Breast epithelium (tissue), 4 donors: ENCODE measurements at regions of chrX and their contacts with region 1.

Region 1: GRCh38 chrX:78283511-78283910 is 43.9 kb downstream of the CYSLTR1 start:
- DNase-seq: no peak
- H3K4me3 ChIP-seq: no peak overlapping the region
- H3K27ac ChIP-seq: no peak overlapping the region
- H3K4me1 ChIP-seq: no peaks in the 10 kb centered on the region
- H3K27me3 ChIP-seq: peaks cover 0 to 7% of the 10 kb centered on the region in 2 donors
- CTCF ChIP-seq: no peak
- POLR2A ChIP-seq: no peak

Region 2: GRCh38 chrX:77820091-77820727 is 463.3 kb before region 1 on chrX:
- intact Hi-C with region 1: no loop called
- DNase-seq: no peak
- H3K4me3 ChIP-seq: no peak overlapping the region
- H3K27ac ChIP-seq: no peak overlapping the region
- H3K4me1 ChIP-seq: no peaks in the 10 kb centered on the region
- H3K27me3 ChIP-seq: peaks cover 0 to under 1% of the 10 kb centered on the region in 2 donors
- CTCF ChIP-seq: no peak
- POLR2A ChIP-seq: no peak

Region 3: GRCh38 chrX:78693536-78693935 is 410.0 kb after region 1 on chrX:
- intact Hi-C with region 1: loop called (anchors 10 kb)
- DNase-seq: no peak
- H3K4me3 ChIP-seq: no peak overlapping the region
- H3K27ac ChIP-seq: no peak overlapping the region
- H3K4me1 ChIP-seq: no peaks in the 10 kb centered on the region
- H3K27me3 ChIP-seq: peaks cover 0 to 15% of the 10 kb centered on the region in 2 donors
- CTCF ChIP-seq: no peak
- POLR2A ChIP-seq: no peak